Lower leg skin (tissue), 4 donors: ENCODE measurements at regions of chr15 and their contacts with region 1.

Region 1: GRCh38 chr15:55241891-55242290 is 45.1 kb upstream of the RSL24D1 start:
- DNase-seq: no peak
- H3K4me3 ChIP-seq: no peak overlapping the region
- CTCF ChIP-seq: no peak
- POLR2A ChIP-seq: no peak

Region 2: GRCh38 chr15:56232058-56232457 is 990.2 kb after region 1 on chr15:
- intact Hi-C with region 1: loop called (anchors 5 kb)
- DNase-seq: no peak
- H3K4me3 ChIP-seq: no peak overlapping the region
- CTCF ChIP-seq: no peak
- POLR2A ChIP-seq: no peak